ENCODE measurements at regions of chr2 and their contacts with region 1.

Region 1: DNA sequence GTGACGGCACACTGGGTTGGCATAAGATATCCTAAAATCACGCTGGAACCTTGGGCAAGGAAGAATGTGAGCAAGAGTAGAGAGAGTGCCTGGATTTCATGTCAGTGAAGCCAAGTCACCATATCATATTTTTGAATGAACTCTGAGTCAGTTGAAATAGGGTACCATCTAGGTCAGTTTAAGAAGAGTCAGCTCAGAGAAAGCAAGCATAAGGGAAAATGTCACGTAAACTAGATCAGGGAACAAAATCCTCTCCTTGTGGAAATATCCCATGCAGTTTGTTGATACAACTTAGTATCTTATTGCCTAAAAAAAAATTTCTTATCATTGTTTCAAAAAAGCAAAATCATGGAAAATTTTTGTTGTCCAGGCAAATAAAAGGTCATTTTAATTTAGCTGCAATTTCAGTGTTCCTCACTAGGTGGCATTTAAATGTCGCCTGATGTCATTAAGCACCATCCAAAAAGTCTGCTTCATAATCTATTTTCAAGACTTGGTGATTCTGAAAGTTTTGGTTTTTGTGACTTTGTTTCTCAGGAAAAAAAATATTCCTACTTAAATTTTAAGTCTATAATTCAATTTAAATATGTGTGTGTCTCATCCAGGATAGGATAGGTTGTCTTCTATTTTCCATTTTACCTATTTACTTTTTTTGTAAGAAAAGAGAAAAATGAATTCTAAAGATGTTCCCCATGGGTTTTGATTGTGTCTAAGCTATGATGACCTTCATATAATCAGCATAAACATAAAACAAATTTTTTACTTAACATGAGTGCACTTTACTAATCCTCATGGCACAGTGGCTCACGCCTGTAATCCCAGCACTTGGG is 19.6 kb downstream of the RSAD2 start:
- DNase-seq: no peak
- H3K4me3 Mint-ChIP-seq: no peak overlapping the region
- H3K27ac Mint-ChIP-seq: peak overlapping the region; percentile 21
- H3K4me1 Mint-ChIP-seq: peaks cover 13% of the 10 kb centered on the region
- H3K27me3 Mint-ChIP-seq: no peaks in the 10 kb centered on the region

Region 2: GRCh38 chr2:6865346-6866274 is 31.5 kb before region 1 on chr2 and contains the start of gene CMPK2:
- CTCF ChIA-PET with region 1: interaction called, 10 read pairs
- intact Hi-C with region 1: no loop called
- DNase-seq: peak; percentile 82
- H3K4me3 Mint-ChIP-seq: peak within 1 kb of the TSS; percentile 89
- H3K27ac Mint-ChIP-seq: peak within 1 kb of the TSS; percentile 77
- H3K4me1 Mint-ChIP-seq: peaks cover 17% of the 10 kb centered on the region
- H3K27me3 Mint-ChIP-seq: no peaks in the 10 kb centered on the region
- total RNA-seq, gene CMPK2: 7.2 to 7.7 TPM

Region 3: GRCh38 chr2:6917071-6917760 is 20.1 kb after region 1 on chr2 and contains the start of gene RNF144A:
- CTCF ChIA-PET with region 1: interaction called, 73 read pairs
- intact Hi-C with region 1: loop called (anchors 1 kb)
- DNase-seq: peak; percentile 67
- H3K4me3 Mint-ChIP-seq: peak within 1 kb of the TSS; percentile 76
- H3K27ac Mint-ChIP-seq: peak within 1 kb of the TSS; percentile 85
- H3K4me1 Mint-ChIP-seq: peaks cover 75% of the 10 kb centered on the region
- H3K27me3 Mint-ChIP-seq: no peaks in the 10 kb centered on the region
- total RNA-seq, gene RNF144A: 49.0 to 50.6 TPM

Region 4: DNA sequence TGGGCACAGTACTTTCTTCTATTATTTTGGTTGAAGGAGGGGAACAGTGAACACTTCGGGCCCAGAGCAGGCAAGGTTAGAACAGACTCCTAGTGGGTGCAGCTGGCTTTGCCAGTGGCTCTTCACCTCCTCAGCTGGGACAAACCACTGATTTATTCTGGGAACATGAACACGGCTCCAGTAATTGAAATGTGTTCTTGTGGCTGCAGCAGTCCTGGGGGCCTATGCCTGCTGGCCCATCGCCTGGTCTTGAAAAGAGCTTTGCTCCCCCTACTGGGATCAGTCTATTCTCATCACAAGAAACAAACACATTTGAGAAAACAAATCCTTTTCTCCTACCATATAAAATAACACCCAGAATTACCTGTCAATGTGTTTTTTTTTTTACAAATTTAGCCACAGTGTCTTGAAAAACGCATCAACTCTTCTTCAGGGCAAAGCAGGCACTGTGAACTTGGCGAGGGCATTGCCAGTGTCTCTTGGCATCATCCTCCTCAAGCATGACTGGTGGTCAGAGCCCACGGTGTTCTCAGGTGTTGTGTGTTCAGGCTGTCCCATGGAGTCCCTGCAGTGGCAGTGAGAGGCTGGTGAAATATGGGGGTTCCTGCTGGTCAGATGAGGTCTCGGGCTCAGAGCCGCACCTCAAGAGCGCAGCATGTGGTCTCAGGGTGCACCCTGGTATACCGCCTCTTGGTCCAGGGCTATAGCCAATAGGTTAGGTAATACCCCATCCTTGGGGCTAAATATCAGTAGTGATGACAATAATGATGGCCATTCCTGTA is 71.4 kb after region 1 on chr2:
- CTCF ChIA-PET with region 1: interaction called, 7 read pairs
- intact Hi-C with region 1: loop called (anchors 5 kb)
- DNase-seq: no peak
- H3K4me3 Mint-ChIP-seq: no peak overlapping the region
- H3K27ac Mint-ChIP-seq: no peak overlapping the region
- H3K4me1 Mint-ChIP-seq: peaks cover 4% of the 10 kb centered on the region
- H3K27me3 Mint-ChIP-seq: no peaks in the 10 kb centered on the region

Region 5: GRCh38 chr2:7083577-7084509 is 186.7 kb after region 1 on chr2:
- CTCF ChIA-PET with region 1: interaction called, 4 read pairs
- intact Hi-C with region 1: loop called (anchors 1 kb)
- DNase-seq: peak; percentile 19
- H3K4me3 Mint-ChIP-seq: no peak overlapping the region
- H3K27ac Mint-ChIP-seq: no peak overlapping the region
- H3K4me1 Mint-ChIP-seq: no peaks in the 10 kb centered on the region
- H3K27me3 Mint-ChIP-seq: no peaks in the 10 kb centered on the region